K562 (cell line): ENCODE measurements at regions of chr6 and their contacts with region 1.

Region 1: DNA sequence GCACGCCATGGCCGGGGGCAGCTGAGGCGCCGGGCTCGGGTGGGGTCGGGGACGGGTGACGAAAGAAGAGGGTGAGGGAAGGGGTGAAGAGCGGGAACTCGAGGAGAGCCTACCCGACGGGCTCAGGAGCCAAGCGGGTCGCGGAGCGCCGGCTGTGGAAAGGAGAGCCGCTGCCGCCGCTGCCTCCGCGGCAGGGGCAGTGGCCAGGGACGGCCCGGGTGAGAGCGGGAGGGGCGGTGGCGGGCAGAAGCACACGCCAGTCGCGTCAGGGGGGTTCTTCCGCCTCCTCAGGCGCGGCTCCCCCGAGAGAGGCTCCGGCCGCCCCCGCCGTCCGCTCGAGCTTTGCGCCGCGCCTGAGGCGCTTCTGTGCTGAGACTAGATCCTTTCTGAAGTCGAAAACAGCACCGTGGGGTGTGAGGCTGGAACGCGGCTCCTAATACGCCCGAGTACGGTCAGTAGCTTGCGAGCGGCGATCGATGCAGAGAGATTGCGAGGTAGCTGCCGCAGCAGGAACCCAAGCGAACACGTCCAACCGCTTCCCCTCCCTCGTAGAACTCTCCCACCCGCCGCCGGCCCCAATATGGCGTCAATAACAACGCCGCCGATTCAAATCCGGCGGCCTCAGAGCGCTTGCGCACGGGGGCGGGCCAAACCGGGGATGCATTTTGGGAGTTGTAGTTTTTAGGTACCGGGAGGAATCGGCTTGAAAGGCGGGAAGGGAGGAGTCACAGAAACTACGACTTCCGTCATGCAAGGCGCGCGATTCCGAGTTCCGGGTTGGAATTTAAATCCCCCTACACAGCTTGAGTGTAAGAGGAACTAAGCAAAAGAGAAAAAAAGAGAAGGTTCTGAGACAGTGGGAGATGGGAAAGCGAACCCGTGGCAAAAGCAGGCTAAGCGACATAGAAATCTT is at the start of gene AKIRIN2:
- DNase-seq: peak; percentile 85 to 99 (median 88)
- ATAC-seq: peak; percentile 80
- H3K4me3 ChIP-seq: peak within 1 kb of the TSS; percentile 96
- H3K27ac ChIP-seq: peak within 1 kb of the TSS; percentile 90
- H3K4me1 ChIP-seq: peaks cover 8 to 15% of the 10 kb centered on the region in 2 experiments
- H3K27me3 ChIP-seq: no peaks in the 10 kb centered on the region
- CTCF ChIP-seq: no peak
- EP300 ChIP-seq: no peak
- POLR2A ChIP-seq: peak; percentile 97
- RAD21 ChIP-seq: no peak
- polyA plus RNA-seq, gene AKIRIN2: 5.8 to 9.1 TPM

Region 2: DNA sequence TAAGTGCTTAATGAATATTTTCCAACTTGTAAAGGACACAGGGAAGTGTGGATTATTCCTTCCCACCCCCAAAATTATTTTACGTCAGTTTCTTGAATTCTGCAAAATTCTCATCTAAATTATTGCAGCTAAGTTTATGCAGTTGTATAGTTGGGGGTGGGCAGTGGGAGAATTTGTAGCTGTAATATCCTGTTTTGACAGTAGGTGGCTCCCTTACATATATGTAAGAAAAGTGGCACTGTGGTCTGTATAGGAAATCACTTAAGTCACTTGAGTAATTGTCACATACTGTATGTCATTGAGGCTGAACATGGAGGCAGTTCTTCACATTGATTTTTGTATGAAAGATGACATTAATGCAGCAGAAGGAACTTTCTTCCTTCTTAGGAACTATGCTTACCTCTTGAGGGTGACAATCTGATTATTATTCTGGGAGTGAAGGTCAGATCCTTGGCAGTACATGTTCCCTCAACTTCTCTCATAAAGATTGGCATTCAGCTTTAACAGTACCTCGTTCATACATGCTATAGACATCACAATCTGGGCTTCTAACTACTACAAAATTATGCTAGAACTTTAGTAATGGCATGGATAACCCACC is 308.8 kb before region 1 on chr6:
- CTCF ChIA-PET with region 1: no interaction called
- POLR2A ChIA-PET with region 1: no interaction called
- in situ Hi-C with region 1: no loop called
- intact Hi-C with region 1: loop called (anchors 10 kb)
- DNase-seq: peak; percentile 42 to 72 (median 50)
- ATAC-seq: peak; percentile 91
- H3K4me3 ChIP-seq: no peak overlapping the region
- H3K27ac ChIP-seq: no peak overlapping the region
- H3K4me1 ChIP-seq: no peaks in the 10 kb centered on the region
- H3K27me3 ChIP-seq: no peaks in the 10 kb centered on the region
- CTCF ChIP-seq: peak; percentile 37 to 71 (median 57); a peak in 5 of 6 replicates
- EP300 ChIP-seq: no peak
- POLR2A ChIP-seq: no peak
- RAD21 ChIP-seq: peak; percentile 76 to 82

Region 3: GRCh38 chr6:87589693-87590549 is 112.0 kb before region 1 on chr6 and contains the starts of genes ORC3 and RARS2:
- CTCF ChIA-PET with region 1: no interaction called
- POLR2A ChIA-PET with region 1: interaction called, 5 read pairs
- in situ Hi-C with region 1: no loop called
- intact Hi-C with region 1: loop called (anchors 2 kb)
- DNase-seq: peak; percentile 97 to 98 (median 97)
- ATAC-seq: peak; percentile 99
- H3K4me3 ChIP-seq: peak within 1 kb of the TSS; percentile 87
- H3K27ac ChIP-seq: peak within 1 kb of the TSS; percentile 95
- H3K4me1 ChIP-seq: peaks cover 0 to 8% of the 10 kb centered on the region in 2 experiments; a peak in 3 of 5 replicates
- H3K27me3 ChIP-seq: no peaks in the 10 kb centered on the region
- CTCF ChIP-seq: no peak
- EP300 ChIP-seq: no peak
- POLR2A ChIP-seq: peak; percentile 94
- RAD21 ChIP-seq: no peak
- polyA plus RNA-seq, gene ORC3: 128 to 159 TPM
- polyA plus RNA-seq, gene RARS2: 57.4 to 92.7 TPM

Region 4: GRCh38 chr6:87682310-87682709 is 19.6 kb before region 1 on chr6:
- CTCF ChIA-PET with region 1: no interaction called
- POLR2A ChIA-PET with region 1: interaction called, 77 read pairs
- in situ Hi-C with region 1: no loop called
- intact Hi-C with region 1: no loop called
- DNase-seq: no peak
- ATAC-seq: no peak
- H3K4me3 ChIP-seq: no peak overlapping the region
- H3K27ac ChIP-seq: no peak overlapping the region
- H3K4me1 ChIP-seq: no peaks in the 10 kb centered on the region
- H3K27me3 ChIP-seq: no peaks in the 10 kb centered on the region
- CTCF ChIP-seq: no peak
- EP300 ChIP-seq: no peak
- POLR2A ChIP-seq: no peak
- RAD21 ChIP-seq: no peak

Region 5: GRCh38 chr6:87731818-87732661 is 30.1 kb after region 1 on chr6:
- CTCF ChIA-PET with region 1: no interaction called
- POLR2A ChIA-PET with region 1: no interaction called
- in situ Hi-C with region 1: no loop called
- intact Hi-C with region 1: no loop called
- DNase-seq: peak in 2 of 4 experiments; percentile 51 to 71
- ATAC-seq: peak; percentile 82
- H3K4me3 ChIP-seq: no peak overlapping the region
- H3K27ac ChIP-seq: peak overlapping the region; percentile 9; the same call in 1 of the 3 replicates
- H3K4me1 ChIP-seq: peaks cover 0 to 19% of the 10 kb centered on the region in 2 experiments; a peak in 2 of 5 replicates
- H3K27me3 ChIP-seq: no peaks in the 10 kb centered on the region
- CTCF ChIP-seq: no peak
- EP300 ChIP-seq: peak; percentile 53; the same call in 1 of the 2 replicates
- POLR2A ChIP-seq: no peak
- RAD21 ChIP-seq: no peak

Region 6: GRCh38 chr6:87756858-87757257 is 54.9 kb after region 1 on chr6:
- CTCF ChIA-PET with region 1: no interaction called
- POLR2A ChIA-PET with region 1: interaction called, 3 read pairs
- in situ Hi-C with region 1: no loop called
- intact Hi-C with region 1: loop called (anchors 5 kb)
- DNase-seq: peak; percentile 46 to 73 (median 56)
- ATAC-seq: peak; percentile 81
- H3K4me3 ChIP-seq: no peak overlapping the region
- H3K27ac ChIP-seq: no peak overlapping the region
- H3K4me1 ChIP-seq: peaks cover 11 to 14% of the 10 kb centered on the region in 2 experiments; a peak in 4 of 5 replicates
- H3K27me3 ChIP-seq: no peaks in the 10 kb centered on the region
- CTCF ChIP-seq: no peak
- EP300 ChIP-seq: peak; percentile 65
- POLR2A ChIP-seq: no peak
- RAD21 ChIP-seq: 0 out of 4 replicates have a peak, but pooled peaks of 1 of the 2 experiments have one; percentile 8

Region 7: DNA sequence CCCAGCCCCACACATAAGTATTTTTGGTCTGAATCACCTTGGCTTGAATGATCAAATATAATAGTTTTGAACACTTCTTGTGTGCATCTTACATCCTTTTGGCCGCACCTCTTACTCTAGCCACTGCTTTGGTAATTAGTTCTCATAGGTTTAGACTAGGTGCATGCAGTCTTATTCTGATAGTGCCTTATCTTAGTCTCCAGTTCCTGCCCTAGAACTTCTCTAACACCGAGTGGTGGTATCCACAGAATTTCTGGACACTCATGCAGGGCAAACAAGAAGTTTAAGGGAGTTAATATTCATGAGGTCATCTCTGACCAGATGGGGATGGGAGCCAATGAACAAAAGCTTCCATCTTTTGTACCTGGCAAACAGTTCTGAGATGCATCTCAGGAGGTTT is 77.6 kb after region 1 on chr6:
- CTCF ChIA-PET with region 1: no interaction called
- POLR2A ChIA-PET with region 1: no interaction called
- in situ Hi-C with region 1: no loop called
- intact Hi-C with region 1: loop called (anchors 5 kb)
- DNase-seq: peak in 2 of 4 experiments; percentile 10 to 25
- ATAC-seq: peak; percentile 74
- H3K4me3 ChIP-seq: no peak overlapping the region
- H3K27ac ChIP-seq: no peak overlapping the region
- H3K4me1 ChIP-seq: peaks cover 0 to 3% of the 10 kb centered on the region in 2 experiments; a peak in 1 of 5 replicates
- H3K27me3 ChIP-seq: peaks cover 2 to 4% of the 10 kb centered on the region in 2 experiments; a peak in 3 of 5 replicates
- CTCF ChIP-seq: no peak
- EP300 ChIP-seq: no peak
- POLR2A ChIP-seq: no peak
- RAD21 ChIP-seq: no peak

Region 8: DNA sequence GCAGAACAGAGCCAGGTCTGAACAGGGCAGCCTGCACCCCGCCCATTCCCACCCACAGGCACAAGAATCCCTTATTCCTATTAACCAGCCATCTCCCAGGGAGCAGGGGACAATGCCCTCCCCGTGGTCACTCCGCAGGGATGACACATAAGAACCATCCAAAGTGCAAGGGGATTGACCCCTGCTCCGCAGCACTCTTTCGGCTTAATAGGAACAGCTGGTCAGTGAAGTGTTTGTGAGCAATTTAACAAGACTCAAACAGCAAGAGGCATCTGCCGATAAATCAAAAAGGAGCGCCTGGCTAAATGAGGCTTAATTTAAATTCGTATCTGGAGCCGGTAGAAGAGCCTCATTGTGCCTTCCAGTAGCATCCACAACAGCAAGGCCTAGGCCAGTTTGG is 872.1 kb after region 1 on chr6:
- CTCF ChIA-PET with region 1: no interaction called
- POLR2A ChIA-PET with region 1: no interaction called
- in situ Hi-C with region 1: no loop called
- intact Hi-C with region 1: no loop called
- DNase-seq: no peak
- ATAC-seq: no peak
- H3K4me3 ChIP-seq: no peak overlapping the region
- H3K27ac ChIP-seq: no peak overlapping the region
- H3K4me1 ChIP-seq: no peaks in the 10 kb centered on the region
- H3K27me3 ChIP-seq: peaks cover 0 to 18% of the 10 kb centered on the region in 2 experiments; a peak in 4 of 5 replicates
- CTCF ChIP-seq: no peak
- EP300 ChIP-seq: no peak
- POLR2A ChIP-seq: no peak
- RAD21 ChIP-seq: no peak